ENCODE measurements at regions of chr9 and their contacts with region 1.

Region 1: GRCh38 chr9:31702957-31703356 is 681.5 kb upstream of the ACO1 start:
- DNase-seq: no peak
- ATAC-seq: no peak
- H3K4me3 ChIP-seq: no peak overlapping the region
- H3K27ac ChIP-seq: no peak overlapping the region
- H3K4me1 ChIP-seq: no peaks in the 10 kb centered on the region
- H3K27me3 ChIP-seq: no peaks in the 10 kb centered on the region
- CTCF ChIP-seq: no peak
- EP300 ChIP-seq: no peak
- POLR2A ChIP-seq: no peak
- RAD21 ChIP-seq: no peak

Region 2: GRCh38 chr9:31597977-31598376 is 105.0 kb before region 1 on chr9:
- CTCF ChIA-PET with region 1: no interaction called
- POLR2A ChIA-PET with region 1: no interaction called
- in situ Hi-C with region 1: no loop called
- intact Hi-C with region 1: loop called (anchors 2 kb)
- DNase-seq: peak; percentile 18
- ATAC-seq: no peak
- H3K4me3 ChIP-seq: no peak overlapping the region
- H3K27ac ChIP-seq: no peak overlapping the region
- H3K4me1 ChIP-seq: no peaks in the 10 kb centered on the region
- H3K27me3 ChIP-seq: no peaks in the 10 kb centered on the region
- CTCF ChIP-seq: no peak
- EP300 ChIP-seq: no peak
- POLR2A ChIP-seq: no peak
- RAD21 ChIP-seq: no peak

Region 3: DNA sequence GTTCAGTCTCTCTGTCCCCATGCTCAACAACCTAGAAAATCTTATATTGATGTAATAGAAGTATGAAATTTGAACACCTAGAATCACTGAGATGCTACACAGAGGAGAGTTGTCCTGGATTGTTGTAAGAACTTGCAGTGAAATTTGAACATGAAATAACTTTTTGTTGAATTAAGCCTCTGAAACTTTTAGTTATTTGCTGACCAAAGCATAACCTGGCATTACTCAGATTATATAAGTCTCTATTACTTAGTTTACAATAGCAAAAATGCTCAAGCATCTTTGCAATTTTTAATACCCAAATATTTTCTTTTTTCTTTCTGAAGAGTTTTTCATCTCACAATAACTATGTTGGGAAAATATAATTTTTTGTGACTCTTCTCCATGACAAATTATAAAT is 50.8 kb after region 1 on chr9:
- CTCF ChIA-PET with region 1: no interaction called
- POLR2A ChIA-PET with region 1: no interaction called
- in situ Hi-C with region 1: no loop called
- intact Hi-C with region 1: loop called (anchors 1 kb)
- DNase-seq: no peak
- ATAC-seq: no peak
- H3K4me3 ChIP-seq: no peak overlapping the region
- H3K27ac ChIP-seq: no peak overlapping the region
- H3K4me1 ChIP-seq: no peaks in the 10 kb centered on the region
- H3K27me3 ChIP-seq: no peaks in the 10 kb centered on the region
- CTCF ChIP-seq: no peak
- EP300 ChIP-seq: no peak
- POLR2A ChIP-seq: no peak
- RAD21 ChIP-seq: no peak

Measured in HepG2 (cell line).